HEK293 (cell line): ENCODE measurements at regions of chr19 and their contacts with region 1.

Region 1: GRCh38 chr19:50230379-50231351 is 27.2 kb downstream of the MYH14 start:
- H3K4me3 ChIP-seq: no peak overlapping the region
- H3K27ac ChIP-seq: no peak overlapping the region
- H3K4me1 ChIP-seq: no peaks in the 10 kb centered on the region
- CTCF ChIP-seq: no peak

Region 2: DNA sequence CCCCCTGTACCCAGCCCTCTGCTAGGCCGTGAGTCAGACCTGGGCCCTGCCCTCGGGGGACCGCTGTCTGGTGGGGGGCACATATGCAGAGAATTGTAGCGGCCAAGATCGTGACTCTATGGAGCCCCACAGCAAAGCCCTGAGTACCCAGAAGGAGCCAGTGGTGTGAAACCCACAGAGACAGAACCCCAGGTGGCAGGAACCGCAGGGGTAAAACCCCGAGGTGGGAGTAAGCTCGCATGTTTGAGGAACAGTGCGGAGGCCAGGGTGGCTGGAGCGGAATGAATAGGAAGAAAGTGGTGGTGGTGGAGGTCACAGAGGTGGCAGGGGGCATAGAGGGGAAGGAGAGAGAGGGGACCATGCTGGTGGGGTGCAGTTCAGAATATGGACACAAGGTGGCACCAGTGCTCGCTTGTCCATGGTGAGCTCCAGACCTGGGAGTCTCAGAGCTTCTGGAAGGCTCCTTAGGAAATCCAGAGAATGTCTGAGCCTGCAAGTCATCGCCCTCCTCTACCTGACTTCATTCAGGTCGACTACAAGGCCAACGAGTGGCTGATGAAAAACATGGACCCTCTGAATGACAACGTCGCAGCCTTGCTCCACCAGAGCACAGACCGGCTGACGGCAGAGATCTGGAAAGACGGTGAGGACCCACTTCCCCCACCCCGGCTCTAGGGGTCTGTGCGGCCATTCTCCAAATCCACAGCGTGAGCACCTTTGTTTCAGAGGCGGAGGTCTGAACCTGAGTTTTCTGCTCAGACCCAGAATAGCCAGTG is 21.6 kb after region 1 on chr19:
- CTCF ChIA-PET with region 1: interaction called, 15 read pairs
- POLR2A ChIA-PET with region 1: no interaction called
- H3K4me3 ChIP-seq: no peak overlapping the region
- H3K27ac ChIP-seq: no peak overlapping the region
- H3K4me1 ChIP-seq: no peaks in the 10 kb centered on the region
- CTCF ChIP-seq: 0 out of 2 replicates have a peak, but pooled peaks have one; percentile 24

Region 3: DNA sequence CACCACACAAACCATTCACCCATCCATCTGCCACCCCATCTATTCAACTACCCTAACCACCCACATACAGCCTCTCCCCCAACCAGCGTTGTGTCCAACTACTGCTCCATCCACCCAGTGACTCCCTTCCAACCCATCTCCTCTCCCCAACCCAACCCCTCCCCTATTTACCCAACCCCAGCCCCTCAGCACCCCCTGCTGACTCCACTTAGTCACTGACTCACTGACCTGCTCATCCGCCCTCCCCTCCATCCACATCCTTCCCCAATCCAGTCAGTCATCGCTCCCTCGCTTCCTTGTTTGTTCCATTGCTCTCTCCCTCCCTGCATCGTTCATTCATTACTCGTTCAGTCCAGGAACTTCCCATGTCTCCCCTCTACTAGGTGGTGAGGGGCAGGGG is 59.3 kb after region 1 on chr19:
- CTCF ChIA-PET with region 1: no interaction called
- POLR2A ChIA-PET with region 1: no interaction called
- H3K4me3 ChIP-seq: no peak overlapping the region
- H3K27ac ChIP-seq: no peak overlapping the region
- H3K4me1 ChIP-seq: no peaks in the 10 kb centered on the region
- CTCF ChIP-seq: no peak

Region 4: GRCh38 chr19:50511068-50511822 is 280.6 kb after region 1 on chr19 and contains the start of gene JOSD2:
- CTCF ChIA-PET with region 1: no interaction called
- POLR2A ChIA-PET with region 1: no interaction called
- H3K4me3 ChIP-seq: peak within 1 kb of the TSS; percentile 64
- H3K27ac ChIP-seq: peak within 1 kb of the TSS; percentile 76
- H3K4me1 ChIP-seq: peaks cover 5% of the 10 kb centered on the region
- CTCF ChIP-seq: no peak